ENCODE measurements at regions of chr9 and their contacts with region 1.

Region 1: DNA sequence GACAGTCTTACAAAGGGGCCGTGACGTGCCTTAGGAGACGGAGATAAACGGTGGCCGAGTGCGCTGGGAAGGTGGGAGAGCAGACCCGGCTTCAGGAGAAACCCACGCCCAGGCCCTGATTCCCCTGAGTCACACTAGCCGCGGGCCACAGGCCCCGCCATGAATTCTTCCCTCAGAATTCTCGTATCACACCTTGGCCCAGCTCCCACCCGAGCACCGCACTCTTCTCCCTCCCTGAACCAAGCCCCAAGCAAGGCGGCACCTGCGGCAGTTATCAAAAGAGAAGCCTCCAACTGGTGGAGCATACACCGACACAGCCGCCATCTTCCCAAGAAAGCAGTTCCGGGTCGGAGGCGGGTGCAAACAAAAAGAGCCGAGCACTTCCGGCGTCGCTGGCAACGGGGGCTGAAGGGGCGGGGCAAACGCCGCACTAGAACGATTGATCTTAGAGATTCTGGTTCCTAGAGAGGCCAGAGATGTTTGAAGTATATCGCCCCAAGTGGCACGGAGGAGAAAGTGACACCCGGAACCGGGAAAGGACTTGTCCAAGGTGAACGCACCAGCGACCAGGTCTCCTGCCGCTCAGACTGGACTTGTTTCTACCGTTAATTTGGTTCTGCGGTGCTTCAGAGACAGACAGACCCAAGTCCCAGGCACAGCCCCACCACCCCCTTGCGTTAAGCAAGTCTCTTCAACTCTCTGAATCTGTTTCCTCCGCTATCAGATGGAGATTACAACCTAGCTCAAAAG is at the start of gene PSMB7:
- DNase-seq: peak; percentile 91 to 96
- H3K4me3 ChIP-seq: peak within 1 kb of the TSS; percentile 90
- H3K27ac ChIP-seq: peak within 1 kb of the TSS; percentile 71
- H3K4me1 ChIP-seq: peaks cover 35% of the 10 kb centered on the region
- H3K27me3 ChIP-seq: no peaks in the 10 kb centered on the region
- CTCF ChIP-seq: peak; percentile 87
- total RNA-seq, gene PSMB7: 328 and 359 TPM in 2 replicates

Region 2: DNA sequence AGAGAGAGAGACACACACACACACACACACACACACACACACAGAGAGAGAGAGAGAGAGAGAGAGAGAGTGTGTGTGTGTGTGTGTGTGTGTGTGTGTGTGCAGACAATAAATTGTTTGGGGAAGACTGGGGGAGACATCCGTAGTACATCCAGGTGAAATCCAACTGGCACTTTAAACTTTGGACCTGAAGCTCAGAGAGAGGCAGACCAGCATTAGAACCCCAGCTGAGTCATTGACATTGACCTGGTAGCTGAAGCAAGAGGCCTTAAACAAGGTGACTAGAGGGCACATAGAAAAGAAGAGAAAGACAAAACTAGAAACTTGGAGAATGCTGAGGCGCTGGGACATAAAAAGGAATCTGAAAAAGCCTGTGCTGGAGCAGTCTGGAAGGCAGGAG is 807.8 kb before region 1 on chr9:
- CTCF ChIA-PET with region 1: interaction called, 17 read pairs
- POLR2A ChIA-PET with region 1: no interaction called
- intact Hi-C with region 1: no loop called
- DNase-seq: no peak
- H3K4me3 ChIP-seq: no peak overlapping the region
- H3K27ac ChIP-seq: no peak overlapping the region
- H3K4me1 ChIP-seq: no peaks in the 10 kb centered on the region
- H3K27me3 ChIP-seq: no peaks in the 10 kb centered on the region
- CTCF ChIP-seq: no peak

Region 3: DNA sequence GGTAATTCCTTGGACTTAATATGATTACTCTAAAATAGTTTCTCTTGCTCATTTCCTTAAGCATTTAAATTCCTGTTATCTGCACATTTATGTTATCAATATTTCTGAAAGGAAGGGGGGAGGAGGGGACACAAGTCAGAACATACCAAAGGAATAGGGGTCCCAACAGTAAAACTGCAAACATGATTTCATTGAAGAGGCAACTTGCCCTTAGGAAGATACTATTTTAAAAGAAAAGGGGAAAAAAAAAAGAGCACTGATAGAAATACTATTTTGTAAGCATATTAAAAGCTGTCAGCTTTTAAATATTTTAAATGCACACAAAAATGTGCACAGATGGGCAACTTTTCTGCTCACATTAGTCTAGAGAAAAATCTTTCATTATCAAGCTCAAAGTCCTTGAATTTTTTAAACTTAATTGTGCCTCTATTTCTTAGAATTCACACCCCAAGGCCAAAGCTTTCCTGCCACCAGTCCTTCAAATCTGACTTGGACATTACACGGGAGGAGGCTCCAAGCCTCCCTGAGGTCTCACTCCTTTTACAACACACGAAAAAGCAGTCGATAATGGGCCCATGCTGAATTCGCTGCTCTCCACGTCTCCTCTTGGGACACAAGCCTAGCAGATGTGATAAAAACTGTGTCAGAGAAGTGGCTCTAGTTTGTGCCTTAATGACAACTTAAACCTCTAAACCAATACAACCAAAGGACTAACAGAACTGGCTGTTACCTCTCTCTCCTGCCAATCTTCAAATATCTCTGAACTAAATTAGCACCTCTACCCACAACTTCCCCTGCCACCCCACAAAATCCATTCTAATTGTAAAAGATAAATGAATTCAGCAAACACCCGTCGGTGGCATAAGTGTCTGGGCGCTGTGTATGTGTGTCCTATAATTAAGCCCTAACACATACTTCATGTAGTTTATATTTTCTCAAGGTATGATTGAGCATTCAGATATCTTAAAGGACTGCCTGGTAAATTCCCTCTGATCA is 639.7 kb before region 1 on chr9:
- CTCF ChIA-PET with region 1: no interaction called
- POLR2A ChIA-PET with region 1: no interaction called
- intact Hi-C with region 1: no loop called
- DNase-seq: no peak
- H3K4me3 ChIP-seq: no peak overlapping the region
- H3K27ac ChIP-seq: no peak overlapping the region
- H3K4me1 ChIP-seq: no peaks in the 10 kb centered on the region
- H3K27me3 ChIP-seq: no peaks in the 10 kb centered on the region
- CTCF ChIP-seq: no peak

Region 4: DNA sequence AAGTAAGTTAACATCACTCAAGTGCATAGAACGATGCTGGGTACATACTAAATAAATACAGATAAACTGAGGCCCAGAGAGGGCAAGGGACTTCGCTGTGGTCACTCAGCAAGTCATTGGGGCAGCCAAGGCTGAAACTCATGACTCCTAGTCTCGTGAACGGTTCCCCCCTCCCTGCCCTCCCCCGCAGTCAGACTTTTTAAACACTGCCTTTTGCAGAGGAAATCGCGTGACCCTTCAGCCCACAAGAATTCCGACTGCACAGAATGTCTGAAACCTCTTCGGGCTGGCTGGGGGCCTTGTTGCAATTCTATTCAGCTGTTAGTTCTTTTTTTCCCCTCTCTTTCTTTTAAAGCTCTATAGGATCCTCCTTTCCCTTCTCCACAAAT is 129.4 kb before region 1 on chr9:
- CTCF ChIA-PET with region 1: no interaction called
- POLR2A ChIA-PET with region 1: no interaction called
- intact Hi-C with region 1: no loop called
- DNase-seq: no peak
- H3K4me3 ChIP-seq: no peak overlapping the region
- H3K27ac ChIP-seq: no peak overlapping the region
- H3K4me1 ChIP-seq: no peaks in the 10 kb centered on the region
- H3K27me3 ChIP-seq: no peaks in the 10 kb centered on the region
- CTCF ChIP-seq: no peak

Region 5: DNA sequence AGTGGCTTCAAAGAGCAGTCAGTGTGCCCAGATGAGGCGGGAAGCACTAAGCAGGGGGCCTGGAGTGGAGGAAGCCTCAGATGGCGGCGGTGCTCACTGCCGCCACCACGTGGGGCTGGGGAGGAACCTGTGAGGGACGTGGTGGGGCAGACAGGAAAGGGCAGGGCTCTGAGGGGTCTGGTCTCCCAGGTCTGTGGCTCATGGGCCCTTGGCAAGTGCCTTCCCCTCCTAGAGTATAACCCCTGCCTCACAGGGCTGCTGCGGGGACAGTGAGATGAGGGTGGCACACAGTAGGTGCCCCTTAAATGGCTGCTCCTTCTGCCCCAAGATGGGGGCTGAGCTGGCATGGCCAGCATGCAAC is 65.3 kb after region 1 on chr9:
- CTCF ChIA-PET with region 1: no interaction called
- POLR2A ChIA-PET with region 1: no interaction called
- intact Hi-C with region 1: loop called (anchors 5 kb)
- DNase-seq: peak in 1 of 2 experiments; percentile 20
- H3K4me3 ChIP-seq: no peak overlapping the region
- H3K27ac ChIP-seq: no peak overlapping the region
- H3K4me1 ChIP-seq: no peaks in the 10 kb centered on the region
- H3K27me3 ChIP-seq: peaks cover 12% of the 10 kb centered on the region
- CTCF ChIP-seq: peak; percentile 55